CD4-positive, alpha-beta T cell (primary cell): ENCODE measurements at regions of chr16 and their contacts with region 1.

Region 1: DNA sequence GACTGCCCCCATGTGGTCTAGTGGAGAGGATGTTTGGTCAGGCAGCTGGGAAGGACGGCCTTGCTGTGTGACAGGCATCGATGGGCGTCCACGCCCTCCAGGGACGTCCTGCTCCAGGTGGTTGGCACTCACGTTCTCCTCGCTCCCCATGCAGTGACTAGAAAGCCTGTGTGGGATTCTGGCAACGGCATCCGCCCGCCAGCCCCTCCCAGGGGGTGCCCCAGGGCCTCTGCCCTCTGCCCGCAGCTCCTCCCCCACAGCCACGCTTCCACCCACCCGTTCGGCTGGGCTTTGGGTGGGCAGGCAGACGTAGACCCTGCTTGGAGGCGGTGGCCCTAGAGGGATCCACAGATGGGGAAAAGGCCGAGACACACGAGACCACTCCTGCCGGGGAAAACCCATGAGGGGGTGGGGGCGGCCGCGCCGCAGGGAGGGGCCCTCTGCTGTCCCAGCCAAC is 4.7 kb upstream of the IL17C start:
- DNase-seq: peak in 11 of 14 experiments; percentile 23 to 81 (median 45)
- ATAC-seq: peak; percentile 57
- H3K4me3 ChIP-seq: peak overlapping the region; percentile 63
- H3K4me3 Mint-ChIP-seq: peak overlapping the region; percentile 80
- H3K27ac ChIP-seq: peak overlapping the region; percentile 27 to 49
- H3K27ac Mint-ChIP-seq: peak overlapping the region; percentile 58
- H3K4me1 ChIP-seq: peaks cover 57% of the 10 kb centered on the region
- H3K4me1 Mint-ChIP-seq: peaks cover 28% of the 10 kb centered on the region
- H3K27me3 ChIP-seq: peaks cover under 1 to 7% of the 10 kb centered on the region in 2 experiments
- H3K27me3 Mint-ChIP-seq: peaks cover 17% of the 10 kb centered on the region
- CTCF ChIP-seq: no peak

Region 2: DNA sequence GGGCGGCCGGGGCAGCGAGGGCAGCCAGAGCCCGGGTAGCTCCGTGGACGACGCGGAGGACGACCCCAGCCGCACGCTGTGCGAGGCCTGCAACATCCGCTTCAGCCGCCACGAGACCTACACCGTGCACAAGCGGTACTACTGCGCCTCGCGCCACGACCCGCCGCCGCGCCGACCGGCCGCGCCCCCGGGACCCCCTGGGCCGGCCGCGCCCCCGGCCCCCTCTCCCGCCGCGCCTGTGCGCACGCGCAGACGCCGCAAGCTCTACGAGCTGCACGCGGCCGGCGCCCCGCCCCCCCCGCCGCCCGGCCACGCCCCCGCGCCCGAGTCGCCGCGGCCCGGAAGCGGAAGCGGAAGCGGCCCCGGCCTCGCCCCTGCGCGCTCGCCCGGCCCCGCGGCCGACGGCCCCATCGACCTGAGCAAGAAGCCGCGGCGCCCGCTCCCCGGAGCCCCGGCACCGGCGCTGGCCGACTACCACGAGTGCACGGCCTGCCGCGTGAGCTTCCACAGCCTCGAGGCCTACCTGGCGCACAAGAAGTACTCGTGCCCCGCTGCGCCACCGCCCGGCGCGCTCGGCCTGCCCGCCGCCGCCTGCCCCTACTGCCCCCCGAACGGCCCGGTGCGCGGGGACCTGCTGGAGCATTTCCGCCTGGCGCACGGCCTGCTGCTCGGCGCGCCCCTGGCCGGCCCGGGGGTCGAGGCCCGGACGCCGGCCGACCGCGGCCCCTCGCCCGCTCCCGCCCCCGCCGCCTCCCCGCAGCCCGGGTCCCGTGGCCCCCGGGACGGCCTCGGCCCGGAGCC is 99.6 kb before region 1 on chr16:
- CTCF ChIA-PET with region 1: no interaction called
- POLR2A ChIA-PET with region 1: no interaction called
- intact Hi-C with region 1: no loop called
- DNase-seq: peak; percentile 60 to 90 (median 77)
- ATAC-seq: peak; percentile 79
- H3K4me3 ChIP-seq: peak overlapping the region; percentile 25
- H3K4me3 Mint-ChIP-seq: no peak overlapping the region
- H3K27ac ChIP-seq: no peak overlapping the region
- H3K27ac Mint-ChIP-seq: peak overlapping the region; percentile 68
- H3K4me1 ChIP-seq: peaks cover 10% of the 10 kb centered on the region
- H3K4me1 Mint-ChIP-seq: peaks cover 11% of the 10 kb centered on the region
- H3K27me3 ChIP-seq: peaks cover 0 to under 1% of the 10 kb centered on the region in 2 experiments
- H3K27me3 Mint-ChIP-seq: no peaks in the 10 kb centered on the region
- CTCF ChIP-seq: no peak

Region 3: GRCh38 chr16:88585269-88585668 is 48.4 kb before region 1 on chr16:
- CTCF ChIA-PET with region 1: no interaction called
- POLR2A ChIA-PET with region 1: no interaction called
- intact Hi-C with region 1: loop called in 1 of 2 experiments (anchors 10 kb)
- DNase-seq: no peak
- ATAC-seq: no peak
- H3K4me3 ChIP-seq: no peak overlapping the region
- H3K4me3 Mint-ChIP-seq: no peak overlapping the region
- H3K27ac ChIP-seq: no peak overlapping the region
- H3K27ac Mint-ChIP-seq: peak overlapping the region; percentile 39
- H3K4me1 ChIP-seq: peaks cover 37% of the 10 kb centered on the region
- H3K4me1 Mint-ChIP-seq: peaks cover 52% of the 10 kb centered on the region
- H3K27me3 ChIP-seq: no peaks in the 10 kb centered on the region
- H3K27me3 Mint-ChIP-seq: no peaks in the 10 kb centered on the region
- CTCF ChIP-seq: no peak

Region 4: GRCh38 chr16:88619859-88620815 is 13.6 kb before region 1 on chr16:
- CTCF ChIA-PET with region 1: interaction called, 8 read pairs
- POLR2A ChIA-PET with region 1: interaction called, 15 read pairs
- intact Hi-C with region 1: loop called in 1 of 2 experiments (anchors 2 kb)
- DNase-seq: peak in 13 of 14 experiments; percentile 37 to 94 (median 59)
- ATAC-seq: peak; percentile 88
- H3K4me3 ChIP-seq: no peak overlapping the region
- H3K4me3 Mint-ChIP-seq: peak overlapping the region; percentile 61
- H3K27ac ChIP-seq: peak overlapping the region in 1 of 2 donors; percentile 71
- H3K27ac Mint-ChIP-seq: peak overlapping the region; percentile 90
- H3K4me1 ChIP-seq: peaks cover 43% of the 10 kb centered on the region
- H3K4me1 Mint-ChIP-seq: peaks cover 19% of the 10 kb centered on the region
- H3K27me3 ChIP-seq: no peaks in the 10 kb centered on the region
- H3K27me3 Mint-ChIP-seq: no peaks in the 10 kb centered on the region
- CTCF ChIP-seq: no peak

Region 5: DNA sequence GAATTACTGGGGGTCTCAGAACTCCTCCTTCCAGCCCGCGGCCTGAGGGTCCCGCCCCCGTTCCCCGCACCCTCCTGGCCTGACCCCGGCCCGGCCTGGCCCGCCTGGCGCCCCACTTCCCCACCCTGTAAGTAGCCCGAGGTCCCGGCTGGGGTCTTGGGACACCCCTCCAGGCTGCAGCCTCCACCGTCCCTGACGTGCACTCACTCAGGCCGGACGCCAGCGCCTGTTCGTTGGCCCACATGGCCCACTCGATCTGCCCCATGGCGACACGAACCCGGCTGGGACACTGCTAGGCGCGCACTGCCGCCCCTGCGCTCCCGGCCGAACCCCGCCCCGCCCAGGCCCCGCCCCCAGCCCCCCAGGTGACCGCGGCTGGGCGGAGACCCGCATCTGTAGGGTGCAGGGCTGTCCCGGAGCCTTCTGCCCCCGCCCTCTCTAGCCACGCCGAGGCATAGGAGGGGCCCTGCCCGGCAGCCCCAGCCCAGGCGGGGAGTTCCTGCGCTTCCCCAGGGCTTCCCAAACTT is 17.1 kb after region 1 on chr16 and contains the start of gene CYBA:
- CTCF ChIA-PET with region 1: no interaction called
- POLR2A ChIA-PET with region 1: interaction called, 3 read pairs
- intact Hi-C with region 1: loop called in 1 of 2 experiments (anchors 2 kb)
- DNase-seq: peak; percentile 64 to 91 (median 76)
- ATAC-seq: peak; percentile 76
- H3K4me3 ChIP-seq: peak within 1 kb of the TSS; percentile 96
- H3K4me3 Mint-ChIP-seq: peak within 1 kb of the TSS; percentile 93
- H3K27ac ChIP-seq: peak within 1 kb of the TSS; percentile 81 to 94
- H3K27ac Mint-ChIP-seq: peak within 1 kb of the TSS; percentile 95
- H3K4me1 ChIP-seq: peaks cover 56% of the 10 kb centered on the region
- H3K4me1 Mint-ChIP-seq: peaks cover 14% of the 10 kb centered on the region
- H3K27me3 ChIP-seq: no peaks in the 10 kb centered on the region
- H3K27me3 Mint-ChIP-seq: no peaks in the 10 kb centered on the region
- CTCF ChIP-seq: no peak
- total RNA-seq, gene CYBA: 292 to 294 TPM